OCI-LY7 (cell line): ENCODE measurements at regions of chr6 and their contacts with region 1.

Region 1: GRCh38 chr6:36027501-36028087 is at the start of gene MAPK14:
- DNase-seq: peak; percentile 100
- H3K4me3 ChIP-seq: peak within 1 kb of the TSS; percentile 99
- H3K27ac ChIP-seq: peak within 1 kb of the TSS; percentile 47
- H3K4me1 ChIP-seq: peaks cover 12% of the 10 kb centered on the region
- CTCF ChIP-seq: peak; percentile 83
- total RNA-seq, gene MAPK14: 30.2 and 38.7 TPM in 2 replicates

Region 2: DNA sequence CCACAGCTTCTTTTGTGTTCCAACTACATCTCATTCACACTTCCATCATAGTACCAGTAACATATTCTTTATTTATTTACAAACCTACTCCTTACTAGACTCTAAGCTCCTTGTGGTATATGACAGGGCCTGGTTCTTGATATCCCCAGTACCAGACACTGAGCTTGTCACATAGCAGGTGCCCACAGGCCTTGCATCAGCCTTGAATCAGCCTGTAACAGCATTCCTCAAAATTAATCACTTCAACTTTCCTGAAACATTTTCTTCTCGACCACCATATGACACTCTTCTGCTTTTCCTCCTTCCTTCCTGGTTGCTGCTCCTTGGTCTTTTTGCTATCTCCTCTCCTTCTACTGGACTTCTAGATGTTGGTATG is 82.0 kb before region 1 on chr6:
- CTCF ChIA-PET with region 1: no interaction called
- POLR2A ChIA-PET with region 1: no interaction called
- intact Hi-C with region 1: no loop called
- DNase-seq: no peak
- H3K4me3 ChIP-seq: no peak overlapping the region
- H3K27ac ChIP-seq: no peak overlapping the region
- H3K4me1 ChIP-seq: no peaks in the 10 kb centered on the region
- CTCF ChIP-seq: no peak

Region 3: GRCh38 chr6:36094753-36095496 is 67.3 kb after region 1 on chr6:
- CTCF ChIA-PET with region 1: interaction called, 5 read pairs
- POLR2A ChIA-PET with region 1: interaction called, 9 read pairs
- intact Hi-C with region 1: loop called (anchors 1 kb)
- DNase-seq: peak; percentile 78
- H3K4me3 ChIP-seq: no peak overlapping the region
- H3K27ac ChIP-seq: no peak overlapping the region
- H3K4me1 ChIP-seq: peaks cover 8% of the 10 kb centered on the region
- CTCF ChIP-seq: peak; percentile 99

Region 4: GRCh38 chr6:36114798-36115408 is 87.3 kb after region 1 on chr6:
- CTCF ChIA-PET with region 1: no interaction called
- POLR2A ChIA-PET with region 1: interaction called, 4 read pairs
- intact Hi-C with region 1: loop called (anchors 5 kb)
- DNase-seq: peak; percentile 84
- H3K4me3 ChIP-seq: peak overlapping the region; percentile 31
- H3K27ac ChIP-seq: peak overlapping the region; percentile 89
- H3K4me1 ChIP-seq: peaks cover 77% of the 10 kb centered on the region
- CTCF ChIP-seq: no peak

Region 5: GRCh38 chr6:36196880-36197548 is 169.4 kb after region 1 on chr6:
- CTCF ChIA-PET with region 1: no interaction called
- POLR2A ChIA-PET with region 1: no interaction called
- intact Hi-C with region 1: loop called (anchors 1 kb)
- DNase-seq: peak; percentile 98
- H3K4me3 ChIP-seq: peak overlapping the region; percentile 83
- H3K27ac ChIP-seq: peak overlapping the region; percentile 54
- H3K4me1 ChIP-seq: peaks cover 27% of the 10 kb centered on the region
- CTCF ChIP-seq: no peak

Region 6: DNA sequence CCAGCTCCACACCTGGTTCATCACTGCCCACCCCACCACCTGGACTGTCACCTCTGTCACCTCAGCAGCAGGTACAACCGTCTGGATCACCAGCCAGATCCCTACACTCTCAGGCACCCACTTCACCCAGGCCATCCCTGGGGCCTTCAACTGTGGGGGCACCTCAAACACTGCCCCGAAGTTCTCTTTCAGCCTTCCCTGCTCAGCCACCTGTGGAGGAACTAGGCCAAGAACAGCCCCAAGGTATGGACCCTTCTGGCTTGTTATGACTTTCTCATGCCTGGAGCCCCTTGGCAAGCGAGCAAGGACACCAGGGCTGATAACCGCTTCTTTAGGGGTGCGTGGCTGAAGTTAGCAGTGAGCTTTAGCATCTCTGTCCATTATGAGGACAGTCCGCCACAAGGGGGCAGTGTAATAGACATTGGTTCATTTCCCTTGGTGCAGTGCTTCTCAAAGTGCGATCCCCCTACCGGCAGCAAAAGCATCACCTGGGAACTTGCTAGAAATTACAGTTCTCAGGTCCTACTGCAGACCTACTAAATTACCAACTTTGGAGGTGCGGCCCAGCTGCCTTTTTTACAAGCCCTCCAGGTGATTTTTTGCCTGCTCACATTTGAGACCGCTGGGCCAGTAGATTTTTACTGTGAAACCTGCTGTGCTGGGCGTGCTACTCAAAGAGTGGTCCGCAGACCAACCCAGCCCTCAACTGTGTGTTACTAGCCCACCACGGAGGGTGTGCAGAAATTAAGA is 274.8 kb after region 1 on chr6:
- CTCF ChIA-PET with region 1: no interaction called
- POLR2A ChIA-PET with region 1: no interaction called
- intact Hi-C with region 1: loop called (anchors 2 kb)
- DNase-seq: peak; percentile 95
- H3K4me3 ChIP-seq: no peak overlapping the region
- H3K27ac ChIP-seq: no peak overlapping the region
- H3K4me1 ChIP-seq: peaks cover 4% of the 10 kb centered on the region
- CTCF ChIP-seq: peak; percentile 97

Region 7: GRCh38 chr6:36360241-36361054 is 332.9 kb after region 1 on chr6:
- CTCF ChIA-PET with region 1: no interaction called
- POLR2A ChIA-PET with region 1: no interaction called
- intact Hi-C with region 1: loop called (anchors 1 kb)
- DNase-seq: peak; percentile 82
- H3K4me3 ChIP-seq: no peak overlapping the region
- H3K27ac ChIP-seq: no peak overlapping the region
- H3K4me1 ChIP-seq: no peaks in the 10 kb centered on the region
- CTCF ChIP-seq: peak; percentile 90